CD4-positive, alpha-beta T cell (primary cell): ENCODE measurements at regions of chr1 and their contacts with region 1.

Region 1: GRCh38 chr1:61851849-61852669 is 109.8 kb downstream of the PATJ start:
- DNase-seq: peak in 3 of 14 experiments; percentile 69 to 75 (median 75)
- ATAC-seq: peak; percentile 54
- H3K4me3 ChIP-seq: no peak overlapping the region
- H3K4me3 Mint-ChIP-seq: no peak overlapping the region
- H3K27ac ChIP-seq: no peak overlapping the region
- H3K27ac Mint-ChIP-seq: no peak overlapping the region
- H3K4me1 ChIP-seq: no peaks in the 10 kb centered on the region
- H3K4me1 Mint-ChIP-seq: no peaks in the 10 kb centered on the region
- H3K27me3 ChIP-seq: no peaks in the 10 kb centered on the region
- H3K27me3 Mint-ChIP-seq: no peaks in the 10 kb centered on the region
- CTCF ChIP-seq: peak; percentile 92

Region 2: GRCh38 chr1:60541831-60542532 is 1310.1 kb before region 1 on chr1:
- CTCF ChIA-PET with region 1: no interaction called
- POLR2A ChIA-PET with region 1: no interaction called
- intact Hi-C with region 1: no loop called
- DNase-seq: no peak
- ATAC-seq: no peak
- H3K4me3 ChIP-seq: no peak overlapping the region
- H3K4me3 Mint-ChIP-seq: no peak overlapping the region
- H3K27ac ChIP-seq: no peak overlapping the region
- H3K27ac Mint-ChIP-seq: no peak overlapping the region
- H3K4me1 ChIP-seq: no peaks in the 10 kb centered on the region
- H3K4me1 Mint-ChIP-seq: no peaks in the 10 kb centered on the region
- H3K27me3 ChIP-seq: no peaks in the 10 kb centered on the region
- H3K27me3 Mint-ChIP-seq: no peaks in the 10 kb centered on the region
- CTCF ChIP-seq: no peak

Region 3: GRCh38 chr1:60848583-60849188 is 1003.4 kb before region 1 on chr1:
- CTCF ChIA-PET with region 1: no interaction called
- POLR2A ChIA-PET with region 1: no interaction called
- intact Hi-C with region 1: loop called in 1 of 2 experiments (anchors 2 kb)
- DNase-seq: peak in 2 of 14 experiments; percentile 5 to 7
- ATAC-seq: no peak
- H3K4me3 ChIP-seq: no peak overlapping the region
- H3K4me3 Mint-ChIP-seq: no peak overlapping the region
- H3K27ac ChIP-seq: no peak overlapping the region
- H3K27ac Mint-ChIP-seq: no peak overlapping the region
- H3K4me1 ChIP-seq: no peaks in the 10 kb centered on the region
- H3K4me1 Mint-ChIP-seq: no peaks in the 10 kb centered on the region
- H3K27me3 ChIP-seq: peaks cover 0 to 5% of the 10 kb centered on the region in 2 experiments
- H3K27me3 Mint-ChIP-seq: peaks cover 13% of the 10 kb centered on the region
- CTCF ChIP-seq: no peak

Region 4: GRCh38 chr1:60984062-60984799 is 867.8 kb before region 1 on chr1:
- CTCF ChIA-PET with region 1: interaction called, 3 read pairs
- POLR2A ChIA-PET with region 1: no interaction called
- intact Hi-C with region 1: loop called (anchors 5 kb)
- DNase-seq: no peak
- ATAC-seq: no peak
- H3K4me3 ChIP-seq: no peak overlapping the region
- H3K4me3 Mint-ChIP-seq: no peak overlapping the region
- H3K27ac ChIP-seq: no peak overlapping the region
- H3K27ac Mint-ChIP-seq: no peak overlapping the region
- H3K4me1 ChIP-seq: no peaks in the 10 kb centered on the region
- H3K4me1 Mint-ChIP-seq: no peaks in the 10 kb centered on the region
- H3K27me3 ChIP-seq: no peaks in the 10 kb centered on the region
- H3K27me3 Mint-ChIP-seq: no peaks in the 10 kb centered on the region
- CTCF ChIP-seq: no peak

Region 5: DNA sequence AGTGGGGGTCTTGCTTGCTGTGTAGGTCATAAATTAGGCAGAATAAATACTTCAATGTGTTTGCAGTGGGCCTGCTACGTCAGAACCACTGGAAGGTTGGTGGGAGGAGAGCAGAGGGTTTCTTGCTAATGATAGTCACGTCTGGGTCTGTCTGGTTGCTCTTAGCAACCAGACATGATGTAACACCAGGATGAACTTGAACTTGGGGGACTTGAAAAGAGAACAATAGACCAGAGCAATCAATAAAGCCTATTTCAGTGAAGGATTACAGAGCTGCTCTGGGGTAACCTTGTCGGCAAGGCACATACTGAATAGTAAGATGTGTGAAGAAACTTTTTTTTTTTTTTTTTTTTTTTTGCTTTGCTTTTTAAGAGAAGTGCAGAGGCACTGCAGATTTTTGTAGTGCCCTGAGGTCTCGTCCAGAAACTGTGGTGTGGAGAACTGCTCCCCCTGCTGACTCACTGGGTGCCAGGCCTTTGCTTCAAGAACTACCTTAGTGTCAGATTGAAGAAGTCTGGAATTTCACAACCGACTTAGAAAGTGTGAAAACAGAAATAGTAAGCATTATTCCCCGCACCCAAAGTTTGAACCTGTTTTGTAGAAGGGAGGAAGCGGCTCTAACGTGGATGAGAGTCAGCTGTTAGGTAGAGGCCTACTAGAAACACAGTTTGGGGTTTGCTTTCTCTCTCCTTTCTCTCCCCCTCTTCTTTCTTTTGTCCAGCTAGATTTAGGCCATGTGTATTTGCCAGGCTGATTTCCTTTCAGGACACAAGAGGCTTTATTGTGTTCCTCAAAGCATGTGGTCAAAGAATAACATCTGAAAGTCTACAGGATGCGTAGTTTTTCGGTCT is 398.7 kb before region 1 on chr1:
- CTCF ChIA-PET with region 1: no interaction called
- POLR2A ChIA-PET with region 1: no interaction called
- intact Hi-C with region 1: loop called (anchors 2 to 5 kb)
- DNase-seq: peak; percentile 43 to 83 (median 59)
- ATAC-seq: peak; percentile 81
- H3K4me3 ChIP-seq: no peak overlapping the region
- H3K4me3 Mint-ChIP-seq: no peak overlapping the region
- H3K27ac ChIP-seq: no peak overlapping the region
- H3K27ac Mint-ChIP-seq: peak overlapping the region; percentile 3
- H3K4me1 ChIP-seq: no peaks in the 10 kb centered on the region
- H3K4me1 Mint-ChIP-seq: peaks cover 12% of the 10 kb centered on the region
- H3K27me3 ChIP-seq: no peaks in the 10 kb centered on the region
- H3K27me3 Mint-ChIP-seq: no peaks in the 10 kb centered on the region
- CTCF ChIP-seq: peak; percentile 69

Region 6: GRCh38 chr1:61588736-61589672 is 263.1 kb before region 1 on chr1:
- CTCF ChIA-PET with region 1: no interaction called
- POLR2A ChIA-PET with region 1: no interaction called
- intact Hi-C with region 1: loop called in 1 of 2 experiments (anchors 5 kb)
- DNase-seq: peak; percentile 13 to 67 (median 35)
- ATAC-seq: peak; percentile 56
- H3K4me3 ChIP-seq: no peak overlapping the region
- H3K4me3 Mint-ChIP-seq: no peak overlapping the region
- H3K27ac ChIP-seq: no peak overlapping the region
- H3K27ac Mint-ChIP-seq: no peak overlapping the region
- H3K4me1 ChIP-seq: no peaks in the 10 kb centered on the region
- H3K4me1 Mint-ChIP-seq: no peaks in the 10 kb centered on the region
- H3K27me3 ChIP-seq: no peaks in the 10 kb centered on the region
- H3K27me3 Mint-ChIP-seq: no peaks in the 10 kb centered on the region
- CTCF ChIP-seq: peak; percentile 71